ENCODE measurements at regions of chr6 and their contacts with region 1.

Region 1: GRCh38 chr6:90860822-90861601 is 274.1 kb upstream of the MAP3K7 start:
- DNase-seq: peak; percentile 33
- H3K4me3 ChIP-seq: no peak overlapping the region
- H3K27ac ChIP-seq: no peak overlapping the region
- H3K4me1 ChIP-seq: no peaks in the 10 kb centered on the region
- CTCF ChIP-seq: peak; percentile 73

Region 2: GRCh38 chr6:90508753-90509152 is 352.3 kb before region 1 on chr6:
- CTCF ChIA-PET with region 1: no interaction called
- POLR2A ChIA-PET with region 1: no interaction called
- intact Hi-C with region 1: loop called (anchors 5 kb)
- DNase-seq: peak; percentile 16
- H3K4me3 ChIP-seq: no peak overlapping the region
- H3K27ac ChIP-seq: no peak overlapping the region
- H3K4me1 ChIP-seq: no peaks in the 10 kb centered on the region
- CTCF ChIP-seq: peak; percentile 68

Region 3: DNA sequence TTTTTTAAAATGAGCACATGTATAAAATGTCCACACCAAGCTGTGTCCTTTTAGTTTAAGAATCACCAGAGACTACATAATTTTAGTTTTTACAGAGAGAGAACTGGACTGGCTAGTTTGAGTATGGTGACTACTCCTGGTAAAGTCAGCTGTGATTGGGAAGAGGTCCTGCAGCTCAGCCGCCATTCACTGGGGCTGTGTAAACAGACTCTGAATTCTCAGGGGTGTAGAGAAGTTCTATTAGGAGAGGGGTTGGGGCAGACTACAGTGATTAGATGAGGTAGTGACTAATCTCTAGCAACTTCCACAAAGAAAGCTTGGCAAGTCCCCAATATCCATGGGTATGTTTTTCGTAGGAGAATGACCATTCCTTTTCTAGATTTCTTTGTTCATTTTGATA is 67.0 kb after region 1 on chr6:
- CTCF ChIA-PET with region 1: no interaction called
- POLR2A ChIA-PET with region 1: no interaction called
- intact Hi-C with region 1: no loop called
- DNase-seq: no peak
- H3K4me3 ChIP-seq: no peak overlapping the region
- H3K27ac ChIP-seq: no peak overlapping the region
- H3K4me1 ChIP-seq: no peaks in the 10 kb centered on the region
- CTCF ChIP-seq: no peak